ENCODE measurements at regions of chr17 and their contacts with region 1.

Region 1: DNA sequence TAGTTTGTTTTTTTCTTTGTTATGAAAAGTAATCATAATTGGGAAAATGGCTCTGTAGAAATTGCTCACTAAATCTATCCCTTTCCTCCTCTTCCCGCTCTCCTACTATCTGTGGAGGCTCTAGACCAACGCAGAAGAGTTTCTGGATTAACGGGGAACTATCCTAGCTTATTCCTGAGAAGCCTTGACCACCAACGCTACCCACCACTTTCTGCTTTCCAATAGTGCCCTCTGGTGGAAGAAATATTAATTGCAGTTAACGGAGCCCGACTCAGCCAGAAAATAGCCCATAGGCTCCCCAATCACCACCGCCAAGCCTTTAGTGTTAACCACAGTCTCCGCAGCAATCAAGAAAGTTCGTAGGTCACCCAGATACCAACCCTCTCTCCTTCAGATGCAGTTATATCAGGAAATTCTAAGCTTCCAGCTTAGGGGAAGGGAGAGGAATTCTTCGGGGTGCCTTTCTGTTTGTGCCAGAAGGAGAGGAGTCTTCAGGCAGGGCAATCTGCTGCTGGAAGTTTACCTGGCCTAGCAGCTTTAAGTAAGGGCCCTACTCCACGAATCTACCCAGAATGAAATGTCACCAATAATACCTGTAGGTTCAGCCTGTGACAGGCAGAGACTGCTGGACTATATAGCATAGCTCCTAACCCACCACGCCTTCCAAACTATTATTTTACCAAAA is 23.0 kb upstream of the NSRP1 start:
- DNase-seq: peak; percentile 63 to 94
- ATAC-seq: peak; percentile 79 to 92
- H3K4me3 ChIP-seq: no peak overlapping the region
- H3K27ac ChIP-seq: no peak overlapping the region
- H3K4me1 ChIP-seq: peaks cover 6% of the 10 kb centered on the region; the same call in 1 of the 3 replicates
- CTCF ChIP-seq: peak; percentile 97
- EP300 ChIP-seq: no peak
- POLR2A ChIP-seq: no peak
- RAD21 ChIP-seq: peak; percentile 95 to 96

Region 2: GRCh38 chr17:29579866-29580771 is 513.5 kb before region 1 on chr17:
- CTCF ChIA-PET with region 1: interaction called, 45 read pairs
- POLR2A ChIA-PET with region 1: interaction called, 3 read pairs
- DNase-seq: peak; percentile 91 to 99
- ATAC-seq: peak; percentile 87 to 96
- H3K4me3 ChIP-seq: no peak overlapping the region
- H3K27ac ChIP-seq: peak overlapping the region; percentile 41 to 72; a peak in 5 of 6 replicates
- H3K4me1 ChIP-seq: peaks cover 26% of the 10 kb centered on the region
- CTCF ChIP-seq: peak; percentile 98
- EP300 ChIP-seq: no peak
- POLR2A ChIP-seq: no peak
- RAD21 ChIP-seq: peak; percentile 95

Region 3: DNA sequence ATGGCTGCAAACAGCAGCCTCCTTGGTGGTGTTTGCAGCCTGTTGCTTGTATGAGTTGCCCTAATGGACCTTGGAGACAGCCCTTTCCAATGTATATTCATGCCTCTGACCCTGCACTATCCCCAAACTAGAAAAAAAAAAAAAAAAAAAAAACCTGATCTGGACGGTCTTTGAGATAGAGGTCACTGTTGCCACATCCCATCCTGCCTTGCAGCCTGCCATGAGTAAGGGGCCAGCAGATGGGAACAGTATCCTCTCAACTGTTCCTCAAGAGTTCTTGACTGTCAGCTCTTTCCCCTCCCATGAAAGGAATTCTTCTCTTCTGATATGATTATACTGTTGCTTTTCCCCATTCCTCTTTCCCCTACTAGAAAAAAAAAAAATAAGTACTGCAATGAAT is 315.9 kb before region 1 on chr17:
- CTCF ChIA-PET with region 1: interaction called, 10 read pairs
- POLR2A ChIA-PET with region 1: no interaction called
- DNase-seq: no peak
- ATAC-seq: no peak
- H3K4me3 ChIP-seq: no peak overlapping the region
- H3K27ac ChIP-seq: no peak overlapping the region
- H3K4me1 ChIP-seq: no peaks in the 10 kb centered on the region; the same call in 2 of the 3 replicates
- CTCF ChIP-seq: no peak
- EP300 ChIP-seq: no peak
- POLR2A ChIP-seq: no peak
- RAD21 ChIP-seq: no peak

Region 4: GRCh38 chr17:29941334-29941733 is 152.3 kb before region 1 on chr17 and contains the start of gene EFCAB5:
- CTCF ChIA-PET with region 1: interaction called, 173 read pairs
- POLR2A ChIA-PET with region 1: no interaction called
- DNase-seq: no peak
- ATAC-seq: no peak
- H3K4me3 ChIP-seq: no peak within 1 kb of the TSS
- H3K27ac ChIP-seq: no peak within 1 kb of the TSS
- H3K4me1 ChIP-seq: no peaks in the 10 kb centered on the region
- CTCF ChIP-seq: no peak
- EP300 ChIP-seq: no peak
- POLR2A ChIP-seq: no peak
- RAD21 ChIP-seq: no peak
- polyA plus RNA-seq, gene EFCAB5: 0.36 and 0.65 TPM in 2 replicates

Region 5: DNA sequence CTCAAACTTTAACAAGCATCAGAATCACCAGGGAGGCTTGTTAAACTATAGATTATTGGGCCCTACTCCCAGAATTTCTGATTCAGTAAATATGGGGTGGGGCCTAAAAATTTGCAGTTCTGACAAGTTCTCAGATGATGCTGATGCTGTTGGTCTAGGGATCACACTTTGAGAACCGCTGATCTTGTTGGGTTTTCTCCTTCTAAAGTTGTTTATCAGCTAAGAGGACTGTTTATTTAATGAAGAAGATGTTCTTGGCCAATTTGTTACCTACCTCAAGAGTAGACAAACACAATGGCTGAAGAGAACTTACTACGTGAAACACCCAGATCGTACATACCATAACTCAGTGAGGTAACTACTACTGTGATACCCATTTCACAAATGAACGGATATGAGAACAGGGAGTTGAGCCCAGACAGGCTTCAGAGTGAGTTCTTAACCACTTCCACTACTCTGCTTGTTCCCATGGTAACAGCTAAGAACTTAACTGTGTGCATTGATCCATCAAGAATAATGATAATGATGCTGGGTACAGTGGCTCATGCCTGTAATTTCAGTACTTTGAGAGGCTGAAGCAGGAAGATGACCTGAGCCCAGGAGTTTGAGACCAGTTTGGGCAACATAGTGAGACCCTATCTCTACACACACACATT is 62.3 kb before region 1 on chr17:
- CTCF ChIA-PET with region 1: interaction called, 122 read pairs
- POLR2A ChIA-PET with region 1: no interaction called
- DNase-seq: no peak
- ATAC-seq: no peak
- H3K4me3 ChIP-seq: no peak overlapping the region
- H3K27ac ChIP-seq: no peak overlapping the region
- H3K4me1 ChIP-seq: no peaks in the 10 kb centered on the region
- CTCF ChIP-seq: no peak
- EP300 ChIP-seq: no peak
- POLR2A ChIP-seq: no peak
- RAD21 ChIP-seq: no peak

Region 6: GRCh38 chr17:30068465-30068864 is 25.1 kb before region 1 on chr17:
- CTCF ChIA-PET with region 1: interaction called, 28 read pairs
- POLR2A ChIA-PET with region 1: no interaction called
- DNase-seq: no peak
- ATAC-seq: no peak
- H3K4me3 ChIP-seq: no peak overlapping the region
- H3K27ac ChIP-seq: no peak overlapping the region
- H3K4me1 ChIP-seq: no peaks in the 10 kb centered on the region
- CTCF ChIP-seq: no peak
- EP300 ChIP-seq: no peak
- POLR2A ChIP-seq: no peak
- RAD21 ChIP-seq: no peak

Region 7: GRCh38 chr17:30116661-30117551 is 23.3 kb after region 1 on chr17 and contains the start of gene NSRP1:
- CTCF ChIA-PET with region 1: interaction called, 12 read pairs
- POLR2A ChIA-PET with region 1: no interaction called
- DNase-seq: peak; percentile 97 to 99
- ATAC-seq: peak; percentile 96 to 98
- H3K4me3 ChIP-seq: peak within 1 kb of the TSS; percentile 62
- H3K27ac ChIP-seq: peak within 1 kb of the TSS; percentile 89 to 94
- H3K4me1 ChIP-seq: peaks cover 40% of the 10 kb centered on the region; the same call in 2 of the 3 replicates
- CTCF ChIP-seq: no peak
- EP300 ChIP-seq: no peak
- POLR2A ChIP-seq: peak; percentile 97
- RAD21 ChIP-seq: no peak
- polyA plus RNA-seq, gene NSRP1: 25.2 and 30.9 TPM in 2 replicates